ENCODE measurements at regions of chr7 and their contacts with region 1.

Region 1: GRCh38 chr7:45917658-45918057 is 3.4 kb downstream of the IGFBP3 start:
- DNase-seq: peak; percentile 61 to 75
- ATAC-seq: peak; percentile 47 to 74 (median 51)
- H3K4me3 ChIP-seq: no peak overlapping the region
- H3K4me3 Mint-ChIP-seq: no peak overlapping the region
- H3K27ac ChIP-seq: no peak overlapping the region
- H3K27ac Mint-ChIP-seq: no peak overlapping the region
- H3K4me1 ChIP-seq: peaks cover 10% of the 10 kb centered on the region
- H3K4me1 Mint-ChIP-seq: peaks cover 7 to 13% of the 10 kb centered on the region in 2 donors
- H3K27me3 ChIP-seq: peaks cover 16% of the 10 kb centered on the region
- H3K27me3 Mint-ChIP-seq: peaks cover 25 to 31% of the 10 kb centered on the region in 2 donors
- CTCF ChIP-seq: peak; percentile 80

Region 2: GRCh38 chr7:46352004-46352954 is 434.6 kb after region 1 on chr7:
- intact Hi-C with region 1: loop called (anchors 1 kb)
- DNase-seq: peak in 1 of 2 donors; percentile 52
- ATAC-seq: peak in 1 of 3 donors; percentile 39
- H3K4me3 ChIP-seq: no peak overlapping the region
- H3K4me3 Mint-ChIP-seq: no peak overlapping the region
- H3K27ac ChIP-seq: no peak overlapping the region
- H3K27ac Mint-ChIP-seq: no peak overlapping the region
- H3K4me1 ChIP-seq: no peaks in the 10 kb centered on the region
- H3K4me1 Mint-ChIP-seq: no peaks in the 10 kb centered on the region
- H3K27me3 ChIP-seq: no peaks in the 10 kb centered on the region
- H3K27me3 Mint-ChIP-seq: peaks cover 0 to 3% of the 10 kb centered on the region in 2 donors
- CTCF ChIP-seq: peak; percentile 23

Region 3: GRCh38 chr7:47088329-47089067 is 1170.8 kb after region 1 on chr7:
- intact Hi-C with region 1: loop called (anchors 1 kb)
- DNase-seq: peak in 1 of 2 donors; percentile 50
- ATAC-seq: peak in 2 of 3 donors; percentile 50 to 51
- H3K4me3 ChIP-seq: no peak overlapping the region
- H3K4me3 Mint-ChIP-seq: no peak overlapping the region
- H3K27ac ChIP-seq: no peak overlapping the region
- H3K27ac Mint-ChIP-seq: no peak overlapping the region
- H3K4me1 ChIP-seq: no peaks in the 10 kb centered on the region
- H3K4me1 Mint-ChIP-seq: no peaks in the 10 kb centered on the region
- H3K27me3 ChIP-seq: no peaks in the 10 kb centered on the region
- H3K27me3 Mint-ChIP-seq: peaks cover 0 to 5% of the 10 kb centered on the region in 2 donors
- CTCF ChIP-seq: peak; percentile 59

Region 4: GRCh38 chr7:47818796-47819606 is 1901.3 kb after region 1 on chr7:
- intact Hi-C with region 1: loop called (anchors 2 kb)
- DNase-seq: peak in 1 of 2 donors; percentile 52
- ATAC-seq: peak in 2 of 3 donors; percentile 31 to 56
- H3K4me3 ChIP-seq: no peak overlapping the region
- H3K4me3 Mint-ChIP-seq: no peak overlapping the region
- H3K27ac ChIP-seq: no peak overlapping the region
- H3K27ac Mint-ChIP-seq: no peak overlapping the region
- H3K4me1 ChIP-seq: no peaks in the 10 kb centered on the region
- H3K4me1 Mint-ChIP-seq: no peaks in the 10 kb centered on the region
- H3K27me3 ChIP-seq: no peaks in the 10 kb centered on the region
- H3K27me3 Mint-ChIP-seq: no peaks in the 10 kb centered on the region
- CTCF ChIP-seq: peak; percentile 79